ENCODE measurements at regions of chr19 and their contacts with region 1.

Region 1: DNA sequence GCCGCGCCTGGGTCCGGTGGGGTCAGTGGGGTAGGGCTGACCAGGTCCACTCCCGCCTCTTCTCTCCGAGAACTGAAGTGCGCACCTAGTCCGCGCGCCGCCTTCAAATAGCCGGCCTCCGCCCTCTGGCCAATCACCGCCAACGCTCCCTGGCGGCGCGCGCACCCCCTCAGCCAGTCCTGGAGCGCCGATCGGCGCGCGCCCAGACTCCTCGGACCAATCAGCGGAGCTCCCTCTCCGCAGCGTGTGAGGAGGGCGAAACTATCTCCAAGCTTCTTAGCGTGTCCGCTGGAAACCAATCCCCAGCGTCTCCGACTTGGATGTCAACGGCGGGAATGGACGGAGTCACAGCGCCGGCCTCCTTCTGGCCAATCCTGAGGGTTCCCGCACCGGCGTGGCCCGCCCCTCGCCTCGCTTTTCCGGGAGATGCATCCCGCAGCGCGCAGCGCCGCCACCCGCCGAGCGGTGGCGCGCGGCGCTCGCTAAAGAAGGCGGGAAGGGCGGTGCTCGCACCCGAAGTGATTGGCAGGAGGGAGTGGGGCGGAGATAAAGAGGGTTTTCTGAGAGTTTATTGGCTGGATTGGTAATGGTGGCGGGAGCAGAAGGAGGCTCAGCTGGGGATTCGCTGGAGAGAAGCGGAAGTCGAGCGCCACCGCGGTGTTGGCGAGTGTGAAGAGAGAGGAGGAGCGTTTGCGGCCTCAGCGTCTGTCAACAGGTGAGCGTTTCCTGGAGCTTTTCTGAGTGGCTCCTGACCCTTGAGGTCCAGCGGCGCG is at the start of gene ASF1B:
- DNase-seq: peak; percentile 98
- H3K4me3 ChIP-seq: peak within 1 kb of the TSS; percentile 68 to 89
- H3K27ac ChIP-seq: peak within 1 kb of the TSS; percentile 59 to 83
- H3K4me1 ChIP-seq: peaks cover 0 to 7% of the 10 kb centered on the region in 2 experiments; a peak in 2 of 4 replicates
- H3K27me3 ChIP-seq: no peaks in the 10 kb centered on the region
- CTCF ChIP-seq: peak; percentile 70
- EP300 ChIP-seq: no peak
- RAD21 ChIP-seq: peak; percentile 93
- polyA plus RNA-seq, gene ASF1B: 17.8 and 19.0 TPM in 2 replicates

Region 2: GRCh38 chr19:14117668-14118164 is 19.0 kb before region 1 on chr19 and contains the start of gene PRKACA:
- CTCF ChIA-PET with region 1: interaction called, 28 read pairs
- POLR2A ChIA-PET with region 1: interaction called, 13 read pairs
- DNase-seq: peak; percentile 99
- H3K4me3 ChIP-seq: peak within 1 kb of the TSS; percentile 79 to 80
- H3K27ac ChIP-seq: peak within 1 kb of the TSS; percentile 70 to 98
- H3K4me1 ChIP-seq: peaks cover 15 to 36% of the 10 kb centered on the region in 2 experiments
- H3K27me3 ChIP-seq: no peaks in the 10 kb centered on the region
- CTCF ChIP-seq: no peak
- EP300 ChIP-seq: no peak
- RAD21 ChIP-seq: no peak
- polyA plus RNA-seq, gene PRKACA: 17.2 and 48.4 TPM in 2 replicates

Region 3: DNA sequence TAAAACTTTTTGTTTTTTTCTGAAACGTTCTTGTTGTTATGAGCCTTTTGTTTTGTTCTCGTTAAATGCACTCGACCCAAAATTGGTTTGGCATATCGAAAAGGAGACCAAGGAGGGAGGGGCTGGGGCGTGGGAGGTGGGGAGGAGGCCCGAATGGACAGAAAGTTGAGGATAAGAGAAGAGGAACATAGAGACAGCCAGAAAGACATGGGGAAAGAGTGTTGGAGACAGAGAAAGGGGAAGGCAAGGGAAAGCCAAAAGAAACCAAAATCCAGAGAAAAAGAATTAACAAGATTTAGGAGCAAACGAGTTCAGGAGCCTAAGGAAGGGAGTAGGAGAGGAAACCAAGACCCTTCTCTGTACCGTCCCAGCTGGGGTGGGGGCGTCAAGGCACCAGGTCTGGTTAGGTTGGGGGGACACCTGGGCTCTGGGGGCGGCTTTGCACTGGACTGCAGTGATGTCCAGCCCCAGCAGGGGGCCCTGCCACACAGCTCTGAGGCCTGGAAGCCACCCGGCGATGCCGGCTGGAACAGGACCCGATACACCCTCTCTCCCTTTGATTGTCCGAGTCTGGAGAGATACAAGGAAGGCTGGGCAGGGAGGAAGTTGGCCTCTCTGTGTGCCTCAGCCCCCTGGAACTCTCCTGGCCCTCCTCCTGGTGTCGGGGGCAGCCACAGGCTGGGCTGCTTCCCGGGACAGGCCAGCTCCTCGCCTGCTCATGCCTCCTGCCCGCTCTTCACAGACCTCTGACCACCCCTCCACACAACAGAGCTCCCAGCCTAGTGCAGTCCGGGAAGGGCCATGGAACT is 11.3 kb after region 1 on chr19:
- CTCF ChIA-PET with region 1: interaction called, 35 read pairs
- POLR2A ChIA-PET with region 1: no interaction called
- DNase-seq: peak; percentile 92
- H3K4me3 ChIP-seq: no peak overlapping the region; a peak in 1 of 4 replicates
- H3K27ac ChIP-seq: peak overlapping the region in 1 of 2 experiments; percentile 17; a peak in 1 of 4 replicates
- H3K4me1 ChIP-seq: peaks cover 0 to 26% of the 10 kb centered on the region in 2 experiments; a peak in 1 of 4 replicates
- H3K27me3 ChIP-seq: no peaks in the 10 kb centered on the region
- CTCF ChIP-seq: peak; percentile 77
- EP300 ChIP-seq: no peak
- RAD21 ChIP-seq: peak; percentile 80

Region 4: DNA sequence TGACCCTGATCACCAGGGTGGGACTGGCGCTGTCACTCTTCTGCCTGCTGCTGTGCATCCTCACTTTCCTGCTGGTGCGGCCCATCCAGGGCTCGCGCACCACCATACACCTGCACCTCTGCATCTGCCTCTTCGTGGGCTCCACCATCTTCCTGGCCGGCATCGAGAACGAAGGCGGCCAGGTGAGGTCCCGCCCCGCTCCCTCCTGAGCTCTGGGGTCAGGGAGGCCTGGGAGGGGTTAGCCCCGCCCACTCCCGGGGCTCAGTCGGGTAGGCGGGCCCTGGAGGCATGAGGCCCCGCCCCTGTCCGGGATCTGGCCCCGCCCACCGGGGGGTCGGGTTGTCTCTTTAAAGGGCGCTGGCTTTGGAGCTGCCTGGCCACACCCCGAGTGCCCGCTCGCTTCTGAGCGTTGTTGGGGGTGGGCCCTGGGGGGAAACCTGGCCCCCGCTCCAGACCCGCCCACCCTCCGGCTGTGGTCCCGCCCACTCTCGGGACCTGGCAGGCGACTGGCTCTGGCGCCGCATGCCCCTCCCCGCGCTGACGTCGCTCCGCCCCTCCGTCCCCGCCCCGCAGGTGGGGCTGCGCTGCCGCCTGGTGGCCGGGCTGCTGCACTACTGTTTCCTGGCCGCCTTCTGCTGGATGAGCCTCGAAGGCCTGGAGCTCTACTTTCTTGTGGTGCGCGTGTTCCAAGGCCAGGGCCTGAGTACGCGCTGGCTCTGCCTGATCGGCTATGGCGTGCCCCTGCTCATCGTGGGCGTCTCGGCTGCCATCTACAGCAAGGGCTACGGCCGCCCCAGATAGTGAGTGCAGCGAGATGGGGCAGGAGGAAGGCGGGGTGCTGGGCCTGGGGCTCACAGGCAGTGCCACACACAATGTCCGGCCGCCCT is 269.3 kb after region 1 on chr19:
- CTCF ChIA-PET with region 1: interaction called, 16 read pairs
- POLR2A ChIA-PET with region 1: interaction called, 5 read pairs
- DNase-seq: peak; percentile 100
- H3K4me3 ChIP-seq: peak overlapping the region in 1 of 2 experiments; percentile 14; a peak in 2 of 4 replicates
- H3K27ac ChIP-seq: peak overlapping the region; percentile 24 to 66; a peak in 3 of 4 replicates
- H3K4me1 ChIP-seq: peaks cover 0 to 7% of the 10 kb centered on the region in 2 experiments; a peak in 1 of 4 replicates
- H3K27me3 ChIP-seq: no peaks in the 10 kb centered on the region
- CTCF ChIP-seq: peak; percentile 66
- EP300 ChIP-seq: no peak
- RAD21 ChIP-seq: peak; percentile 82

Region 5: DNA sequence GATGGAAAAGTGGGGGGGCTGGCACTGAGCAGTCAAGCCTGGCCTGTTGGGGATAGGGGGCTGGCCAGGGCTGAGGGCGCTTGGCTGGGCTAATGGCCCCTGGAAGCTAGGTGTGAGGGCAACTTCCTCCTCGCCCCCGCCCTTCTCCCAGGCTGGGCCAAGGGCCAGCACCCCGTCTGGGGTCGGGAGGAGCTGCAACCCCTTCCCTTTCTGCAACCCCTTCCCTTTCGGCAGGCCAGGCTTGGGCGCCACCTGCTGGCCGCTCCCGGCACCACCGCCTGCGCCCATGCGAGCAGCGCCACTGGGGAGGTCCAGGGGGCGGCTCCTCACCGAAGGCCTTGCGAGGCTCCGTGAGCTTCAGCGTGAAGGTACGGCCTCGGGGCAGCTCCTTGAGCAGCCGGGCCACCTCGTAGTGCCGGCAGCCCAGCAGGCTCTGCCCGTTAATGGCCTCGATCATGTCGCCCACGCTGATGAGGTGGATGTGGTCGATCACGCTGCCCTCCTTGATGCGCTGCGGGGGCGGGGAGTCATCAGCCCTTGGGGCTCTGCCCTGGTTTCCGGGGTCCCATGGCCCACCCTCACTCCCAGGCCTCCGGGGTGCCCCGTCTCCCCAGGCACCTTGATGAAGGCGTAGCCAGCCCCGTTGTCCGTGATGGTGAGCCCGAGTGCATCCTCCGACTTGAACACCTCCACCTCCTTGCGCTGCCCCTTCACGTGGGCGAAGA is 343.4 kb after region 1 on chr19:
- CTCF ChIA-PET with region 1: interaction called, 27 read pairs
- POLR2A ChIA-PET with region 1: interaction called, 3 read pairs
- DNase-seq: peak; percentile 95
- H3K4me3 ChIP-seq: peak overlapping the region in 1 of 2 experiments; percentile 50; a peak in 1 of 4 replicates
- H3K27ac ChIP-seq: peak overlapping the region in 1 of 2 experiments; percentile 22; a peak in 1 of 4 replicates
- H3K4me1 ChIP-seq: peaks cover 18 to 26% of the 10 kb centered on the region in 2 experiments; a peak in 3 of 4 replicates
- H3K27me3 ChIP-seq: no peaks in the 10 kb centered on the region
- CTCF ChIP-seq: peak; percentile 89
- EP300 ChIP-seq: no peak
- RAD21 ChIP-seq: peak; percentile 54

Measured in SK-N-SH (cell line).